GM12878 (cell line): ENCODE measurements at regions of chr3 and their contacts with region 1.

Region 1: GRCh38 chr3:112013058-112013783 is 14.5 kb downstream of the TAGLN3 start:
- DNase-seq: no peak
- ATAC-seq: peak; percentile 94
- H3K4me3 ChIP-seq: no peak overlapping the region
- H3K27ac ChIP-seq: no peak overlapping the region
- H3K4me1 ChIP-seq: no peaks in the 10 kb centered on the region
- H3K27me3 ChIP-seq: no peaks in the 10 kb centered on the region; a peak in 1 of 4 replicates
- CTCF ChIP-seq: peak; percentile 70 to 80 (median 72)
- EP300 ChIP-seq: no peak
- POLR2A ChIP-seq: no peak
- RAD21 ChIP-seq: peak; percentile 81

Region 2: DNA sequence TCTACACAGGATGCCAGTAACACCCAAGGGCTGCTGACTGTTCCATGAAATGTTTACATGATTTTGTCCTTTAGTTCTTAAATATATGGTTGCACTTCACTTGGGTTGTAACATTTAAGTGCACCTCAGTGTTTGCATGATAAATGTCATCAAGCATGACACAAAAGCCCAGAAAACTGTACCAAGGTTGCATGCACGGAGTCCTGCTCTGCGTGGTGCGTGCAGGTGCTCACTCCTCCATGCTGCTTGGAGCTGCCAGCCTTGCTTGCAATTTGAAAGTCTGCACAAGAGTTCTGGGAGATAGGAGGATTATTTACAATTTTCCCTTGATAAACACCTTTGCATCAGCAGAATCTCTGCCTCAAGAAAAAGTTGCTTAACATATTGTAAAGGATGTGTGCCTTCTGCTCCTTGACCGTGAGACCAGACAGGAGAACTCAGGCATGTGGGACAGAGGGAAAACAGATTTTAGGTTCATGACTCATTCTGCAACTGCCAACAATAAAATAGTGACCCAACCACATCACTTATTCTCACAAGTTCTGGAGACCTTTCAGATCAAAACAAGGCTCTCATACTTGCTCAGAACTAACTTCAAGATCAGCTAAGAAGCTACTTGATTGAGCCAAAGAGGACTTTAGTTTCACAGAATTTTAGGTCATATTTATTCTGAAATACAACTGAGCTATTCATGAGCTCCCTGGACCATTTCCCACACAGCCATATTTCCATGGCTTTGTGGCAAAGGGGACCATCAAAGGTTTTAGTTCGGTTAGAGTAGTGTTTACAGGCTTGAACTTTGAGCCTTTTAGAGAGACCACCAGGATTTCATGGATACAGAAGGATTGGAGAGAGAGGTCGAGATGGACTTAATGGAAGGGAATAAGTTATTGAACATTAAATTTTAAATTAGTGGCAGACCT is 289.7 kb before region 1 on chr3:
- CTCF ChIA-PET with region 1: interaction called, 161 read pairs
- POLR2A ChIA-PET with region 1: no interaction called
- RAD21 ChIA-PET with region 1: interaction called, 64 read pairs
- SMC1A ChIA-PET with region 1: interaction called, 123 read pairs
- in situ Hi-C with region 1: no loop called
- intact Hi-C with region 1: no loop called
- DNase-seq: no peak
- ATAC-seq: peak; percentile 48; the same call in 2 of the 3 replicates
- H3K4me3 ChIP-seq: no peak overlapping the region
- H3K27ac ChIP-seq: no peak overlapping the region
- H3K4me1 ChIP-seq: peaks cover 8% of the 10 kb centered on the region
- H3K27me3 ChIP-seq: no peaks in the 10 kb centered on the region
- CTCF ChIP-seq: no peak
- EP300 ChIP-seq: no peak
- POLR2A ChIP-seq: no peak
- RAD21 ChIP-seq: no peak

Region 3: DNA sequence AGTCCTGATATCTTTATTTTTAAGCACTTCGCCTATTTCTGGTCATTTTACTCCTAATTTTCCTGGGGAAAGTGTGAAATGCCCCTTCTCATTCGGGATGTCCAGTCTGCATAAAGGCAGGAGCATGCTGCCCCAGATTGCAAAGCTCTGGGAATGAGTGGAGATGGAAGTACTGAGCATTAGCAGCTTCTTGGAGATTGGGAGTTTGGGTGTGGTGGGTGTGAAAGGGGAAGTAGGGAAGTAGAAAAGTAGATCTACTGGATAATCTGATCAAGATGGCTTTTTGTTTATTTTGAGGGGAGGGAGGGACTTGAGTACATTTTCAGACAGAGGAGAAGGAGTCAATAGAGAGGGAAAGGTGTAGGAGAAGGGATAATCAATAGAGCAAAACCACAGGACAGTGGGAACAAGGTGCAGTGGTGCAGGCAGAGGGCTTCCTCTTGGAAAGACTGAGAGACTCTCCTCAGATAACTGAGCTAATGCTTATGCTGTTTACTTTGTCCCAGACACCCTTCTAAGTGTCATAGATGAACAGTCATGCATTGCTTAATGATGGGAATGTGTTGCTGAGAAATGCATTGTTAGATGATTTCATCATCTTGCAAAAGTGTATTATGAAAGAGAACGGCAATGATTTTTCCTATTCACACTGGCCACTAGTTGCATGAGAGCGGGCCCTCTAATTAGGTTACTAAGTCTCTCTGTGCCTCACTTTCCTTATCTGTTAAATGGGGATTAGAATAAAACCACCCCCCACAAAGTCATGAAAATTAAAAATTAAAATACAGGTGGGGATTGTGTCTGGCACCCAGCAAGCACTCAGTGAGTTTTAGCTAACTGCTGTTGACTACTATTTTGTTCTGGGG is 108.6 kb before region 1 on chr3:
- CTCF ChIA-PET with region 1: interaction called, 10 read pairs
- POLR2A ChIA-PET with region 1: no interaction called
- RAD21 ChIA-PET with region 1: interaction called, 3 read pairs
- SMC1A ChIA-PET with region 1: interaction called, 3 read pairs
- in situ Hi-C with region 1: no loop called
- intact Hi-C with region 1: no loop called
- DNase-seq: no peak
- ATAC-seq: no peak
- H3K4me3 ChIP-seq: no peak overlapping the region
- H3K27ac ChIP-seq: no peak overlapping the region
- H3K4me1 ChIP-seq: no peaks in the 10 kb centered on the region
- H3K27me3 ChIP-seq: no peaks in the 10 kb centered on the region
- CTCF ChIP-seq: no peak
- EP300 ChIP-seq: no peak
- POLR2A ChIP-seq: no peak
- RAD21 ChIP-seq: no peak

Region 4: DNA sequence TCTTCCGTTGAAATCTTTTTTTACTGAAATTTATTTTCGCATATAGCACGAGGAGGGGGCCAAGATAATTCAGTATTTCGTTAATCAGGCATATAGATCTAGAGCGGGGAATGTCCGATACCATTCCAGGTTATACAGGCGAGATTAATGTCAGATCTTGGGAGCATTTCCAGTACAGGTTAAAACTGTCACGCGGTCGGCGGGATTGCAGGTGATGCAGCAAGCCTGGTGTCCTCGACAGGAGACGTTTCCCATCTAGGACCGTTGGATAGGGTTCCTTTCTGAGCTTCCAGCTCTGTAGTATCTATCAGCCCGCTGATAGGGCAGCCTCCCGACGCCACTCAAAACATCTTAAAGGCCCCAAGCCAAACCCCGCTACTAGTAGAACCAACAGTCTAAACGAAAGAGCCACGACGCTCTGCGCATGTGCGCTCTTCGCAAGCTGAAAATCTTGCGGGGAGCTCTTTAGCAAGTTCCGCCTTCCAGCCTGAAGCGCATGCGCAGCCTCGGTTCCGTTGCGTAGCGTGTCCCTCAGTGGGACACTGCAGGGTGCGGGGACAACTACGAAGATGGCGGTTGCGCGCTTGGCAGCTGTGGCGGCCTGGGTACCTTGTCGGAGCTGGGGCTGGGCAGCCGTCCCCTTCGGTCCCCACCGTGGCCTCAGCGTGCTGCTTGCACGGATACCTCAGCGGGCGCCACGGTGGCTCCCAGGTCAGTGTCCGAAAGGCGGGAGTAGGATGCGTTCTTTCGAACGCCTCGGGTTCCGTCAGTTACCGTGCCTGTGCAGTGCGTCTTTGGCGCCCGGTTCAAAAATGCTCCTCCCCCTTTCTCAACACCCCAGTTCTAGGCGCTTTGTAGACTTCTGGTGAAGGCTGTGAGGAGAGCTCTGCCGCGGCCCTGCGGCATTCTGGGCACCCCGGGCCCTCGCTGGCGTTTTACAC is 34.5 kb before region 1 on chr3 and contains the start of gene ABHD10:
- CTCF ChIA-PET with region 1: interaction called, 47 read pairs
- POLR2A ChIA-PET with region 1: interaction called, 9 read pairs
- RAD21 ChIA-PET with region 1: interaction called, 37 read pairs
- SMC1A ChIA-PET with region 1: interaction called, 22 read pairs
- in situ Hi-C with region 1: no loop called
- intact Hi-C with region 1: no loop called
- DNase-seq: peak; percentile 92
- ATAC-seq: peak; percentile 97
- H3K4me3 ChIP-seq: peak within 1 kb of the TSS; percentile 89
- H3K27ac ChIP-seq: peak within 1 kb of the TSS; percentile 78
- H3K4me1 ChIP-seq: peaks cover 5% of the 10 kb centered on the region
- H3K27me3 ChIP-seq: no peaks in the 10 kb centered on the region
- CTCF ChIP-seq: no peak
- EP300 ChIP-seq: no peak
- POLR2A ChIP-seq: peak; percentile 99
- RAD21 ChIP-seq: no peak
- polyA plus RNA-seq, gene ABHD10: 12.3 to 16.7 TPM

Region 5: DNA sequence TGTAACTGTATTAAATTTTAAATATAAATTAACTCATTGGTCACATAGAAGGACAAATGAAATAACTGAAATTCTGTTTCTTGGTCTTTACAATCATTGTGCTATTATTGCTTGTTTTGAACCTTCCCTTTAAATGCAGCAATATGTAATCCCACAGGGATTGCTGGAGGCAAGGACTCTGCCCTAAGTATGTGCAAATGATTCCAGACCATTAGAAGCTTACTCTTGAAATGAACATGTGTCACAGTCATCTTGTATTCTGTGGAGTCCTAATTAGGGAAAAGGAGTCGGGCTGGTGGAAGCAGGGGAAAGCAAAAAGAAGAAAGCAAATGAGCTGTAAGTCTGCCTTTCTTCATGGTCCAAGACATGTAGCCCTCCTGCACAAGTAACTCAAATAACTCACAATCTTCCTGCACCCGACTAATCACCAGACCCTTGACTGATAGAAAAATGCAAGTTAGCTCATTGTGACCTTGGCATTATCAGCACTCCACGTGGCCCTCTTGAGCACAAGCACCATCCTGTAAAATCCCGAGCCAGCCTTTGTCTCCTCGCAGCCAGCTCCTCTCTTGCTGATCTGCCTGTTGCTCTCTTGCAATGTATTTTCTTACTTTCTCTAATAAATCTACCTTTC is 19.0 kb after region 1 on chr3:
- CTCF ChIA-PET with region 1: interaction called, 21 read pairs
- POLR2A ChIA-PET with region 1: interaction called, 3 read pairs
- RAD21 ChIA-PET with region 1: interaction called, 8 read pairs
- SMC1A ChIA-PET with region 1: interaction called, 4 read pairs
- in situ Hi-C with region 1: no loop called
- intact Hi-C with region 1: no loop called
- DNase-seq: no peak
- ATAC-seq: no peak
- H3K4me3 ChIP-seq: no peak overlapping the region
- H3K27ac ChIP-seq: no peak overlapping the region
- H3K4me1 ChIP-seq: no peaks in the 10 kb centered on the region
- H3K27me3 ChIP-seq: 0 out of 4 replicates have a peak, but pooled peaks cover 0 to 2% of the 10 kb centered on the region in 2 experiments
- CTCF ChIP-seq: no peak
- EP300 ChIP-seq: no peak
- POLR2A ChIP-seq: no peak
- RAD21 ChIP-seq: no peak

Region 6: GRCh38 chr3:112167758-112168157 is 154.5 kb after region 1 on chr3:
- CTCF ChIA-PET with region 1: no interaction called
- POLR2A ChIA-PET with region 1: no interaction called
- RAD21 ChIA-PET with region 1: no interaction called
- SMC1A ChIA-PET with region 1: no interaction called
- in situ Hi-C with region 1: no loop called
- intact Hi-C with region 1: no loop called
- DNase-seq: peak; percentile 27
- ATAC-seq: peak; percentile 97
- H3K4me3 ChIP-seq: no peak overlapping the region
- H3K27ac ChIP-seq: no peak overlapping the region
- H3K4me1 ChIP-seq: no peaks in the 10 kb centered on the region
- H3K27me3 ChIP-seq: no peaks in the 10 kb centered on the region
- CTCF ChIP-seq: no peak
- EP300 ChIP-seq: peak; percentile 24 to 57; a peak in 2 of 4 replicates
- POLR2A ChIP-seq: no peak
- RAD21 ChIP-seq: no peak